Adrenal gland (tissue), 19 donors: ENCODE measurements at regions of chr4 and their contacts with region 1.

Region 1: DNA sequence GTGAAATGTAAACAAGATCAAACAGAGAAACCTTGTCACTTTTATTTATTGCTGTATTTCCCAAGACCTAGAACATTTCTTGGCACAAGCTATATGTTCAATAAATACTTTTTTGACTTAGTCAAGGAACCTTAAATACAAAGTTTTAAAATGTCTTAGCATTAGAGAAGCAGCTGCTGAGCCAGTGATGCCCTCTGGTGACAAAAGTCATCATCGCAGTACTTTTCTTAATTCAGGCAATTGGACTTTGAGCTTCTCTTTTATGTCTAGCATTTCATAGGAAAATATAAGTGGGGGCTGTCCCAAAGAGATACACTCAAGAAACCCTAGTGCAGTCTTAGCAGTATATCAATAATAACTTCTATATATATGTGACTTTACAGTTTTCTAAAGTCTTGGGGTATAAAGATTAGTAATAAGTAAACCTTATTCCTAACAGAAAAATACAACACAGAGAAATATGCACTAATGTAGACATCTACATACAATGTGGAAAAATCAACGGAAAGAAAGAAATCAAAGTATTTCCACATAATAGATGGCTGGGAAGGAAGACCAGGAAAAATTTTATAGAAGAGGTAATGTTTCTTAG is 118.4 kb downstream of the DTHD1 start:
- DNase-seq: peak in 5 of 7 donors; percentile 21 to 58 (median 38)
- H3K4me3 ChIP-seq: no peak overlapping the region
- H3K27ac ChIP-seq: no peak overlapping the region
- H3K4me1 ChIP-seq: no peaks in the 10 kb centered on the region
- H3K27me3 ChIP-seq: no peaks in the 10 kb centered on the region
- CTCF ChIP-seq: peak; percentile 48 to 72 (median 56)
- POLR2A ChIP-seq: no peak

Region 2: GRCh38 chr4:36138220-36138619 is 261.6 kb before region 1 on chr4:
- intact Hi-C with region 1: no loop called
- DNase-seq: no peak
- H3K4me3 ChIP-seq: no peak overlapping the region
- H3K27ac ChIP-seq: no peak overlapping the region
- H3K4me1 ChIP-seq: no peaks in the 10 kb centered on the region
- H3K27me3 ChIP-seq: no peaks in the 10 kb centered on the region
- CTCF ChIP-seq: no peak
- POLR2A ChIP-seq: no peak

Region 3: GRCh38 chr4:36351082-36351666 is 48.7 kb before region 1 on chr4:
- intact Hi-C with region 1: loop called in 1 of 2 experiments (anchors 10 kb)
- DNase-seq: peak; percentile 56 to 91 (median 77)
- H3K4me3 ChIP-seq: no peak overlapping the region
- H3K27ac ChIP-seq: no peak overlapping the region
- H3K4me1 ChIP-seq: no peaks in the 10 kb centered on the region
- H3K27me3 ChIP-seq: no peaks in the 10 kb centered on the region
- CTCF ChIP-seq: peak; percentile 58 to 83 (median 78)
- POLR2A ChIP-seq: no peak

Region 4: GRCh38 chr4:36702245-36702644 is 302.4 kb after region 1 on chr4:
- intact Hi-C with region 1: no loop called
- DNase-seq: no peak
- H3K4me3 ChIP-seq: no peak overlapping the region
- H3K27ac ChIP-seq: no peak overlapping the region
- H3K4me1 ChIP-seq: no peaks in the 10 kb centered on the region
- H3K27me3 ChIP-seq: no peaks in the 10 kb centered on the region
- CTCF ChIP-seq: no peak
- POLR2A ChIP-seq: no peak

Region 5: GRCh38 chr4:36758312-36759178 is 358.7 kb after region 1 on chr4:
- intact Hi-C with region 1: no loop called
- DNase-seq: no peak
- H3K4me3 ChIP-seq: no peak overlapping the region
- H3K27ac ChIP-seq: no peak overlapping the region
- H3K4me1 ChIP-seq: no peaks in the 10 kb centered on the region
- H3K27me3 ChIP-seq: no peaks in the 10 kb centered on the region
- CTCF ChIP-seq: no peak
- POLR2A ChIP-seq: no peak